ENCODE measurements at regions of chr19 and their contacts with region 1.

Region 1: GRCh38 chr19:12064590-12065538 is at the start of gene ZNF844:
- DNase-seq: peak; percentile 89
- ATAC-seq: peak; percentile 96
- H3K4me3 ChIP-seq: peak within 1 kb of the TSS; percentile 73 to 93 (median 76)
- H3K4me3 Mint-ChIP-seq: peak within 1 kb of the TSS; percentile 95
- H3K27ac ChIP-seq: peak within 1 kb of the TSS; percentile 83 to 87
- H3K27ac Mint-ChIP-seq: peak within 1 kb of the TSS; percentile 94
- H3K4me1 ChIP-seq: peaks cover 6 to 16% of the 10 kb centered on the region in 2 donors
- H3K4me1 Mint-ChIP-seq: peaks cover 11% of the 10 kb centered on the region
- H3K27me3 ChIP-seq: no peaks in the 10 kb centered on the region
- H3K27me3 Mint-ChIP-seq: no peaks in the 10 kb centered on the region
- CTCF ChIP-seq: no peak
- total RNA-seq, gene ZNF844: 33.7 and 36.4 TPM in 2 replicates

Region 2: GRCh38 chr19:11987405-11988281 is 77.2 kb before region 1 on chr19:
- CTCF ChIA-PET with region 1: interaction called, 8 read pairs
- POLR2A ChIA-PET with region 1: interaction called, 3 read pairs
- intact Hi-C with region 1: loop called (anchors 2 kb)
- DNase-seq: peak; percentile 93
- ATAC-seq: peak; percentile 93
- H3K4me3 ChIP-seq: peak overlapping the region; percentile 86 to 98 (median 97)
- H3K4me3 Mint-ChIP-seq: peak overlapping the region; percentile 96
- H3K27ac ChIP-seq: peak overlapping the region; percentile 85 to 92
- H3K27ac Mint-ChIP-seq: peak overlapping the region; percentile 89
- H3K4me1 ChIP-seq: peaks cover 0 to 5% of the 10 kb centered on the region in 2 donors
- H3K4me1 Mint-ChIP-seq: peaks cover 24% of the 10 kb centered on the region
- H3K27me3 ChIP-seq: no peaks in the 10 kb centered on the region
- H3K27me3 Mint-ChIP-seq: no peaks in the 10 kb centered on the region
- CTCF ChIP-seq: no peak

Region 3: GRCh38 chr19:12075538-12076139 is 10.8 kb after region 1 on chr19:
- CTCF ChIA-PET with region 1: interaction called, 10 read pairs
- POLR2A ChIA-PET with region 1: interaction called, 4 read pairs
- intact Hi-C with region 1: no loop called
- DNase-seq: no peak
- ATAC-seq: no peak
- H3K4me3 ChIP-seq: peak overlapping the region in 1 of 5 experiments; percentile 12
- H3K4me3 Mint-ChIP-seq: no peak overlapping the region
- H3K27ac ChIP-seq: no peak overlapping the region
- H3K27ac Mint-ChIP-seq: no peak overlapping the region
- H3K4me1 ChIP-seq: no peaks in the 10 kb centered on the region
- H3K4me1 Mint-ChIP-seq: no peaks in the 10 kb centered on the region
- H3K27me3 ChIP-seq: no peaks in the 10 kb centered on the region
- H3K27me3 Mint-ChIP-seq: no peaks in the 10 kb centered on the region
- CTCF ChIP-seq: no peak

Region 4: DNA sequence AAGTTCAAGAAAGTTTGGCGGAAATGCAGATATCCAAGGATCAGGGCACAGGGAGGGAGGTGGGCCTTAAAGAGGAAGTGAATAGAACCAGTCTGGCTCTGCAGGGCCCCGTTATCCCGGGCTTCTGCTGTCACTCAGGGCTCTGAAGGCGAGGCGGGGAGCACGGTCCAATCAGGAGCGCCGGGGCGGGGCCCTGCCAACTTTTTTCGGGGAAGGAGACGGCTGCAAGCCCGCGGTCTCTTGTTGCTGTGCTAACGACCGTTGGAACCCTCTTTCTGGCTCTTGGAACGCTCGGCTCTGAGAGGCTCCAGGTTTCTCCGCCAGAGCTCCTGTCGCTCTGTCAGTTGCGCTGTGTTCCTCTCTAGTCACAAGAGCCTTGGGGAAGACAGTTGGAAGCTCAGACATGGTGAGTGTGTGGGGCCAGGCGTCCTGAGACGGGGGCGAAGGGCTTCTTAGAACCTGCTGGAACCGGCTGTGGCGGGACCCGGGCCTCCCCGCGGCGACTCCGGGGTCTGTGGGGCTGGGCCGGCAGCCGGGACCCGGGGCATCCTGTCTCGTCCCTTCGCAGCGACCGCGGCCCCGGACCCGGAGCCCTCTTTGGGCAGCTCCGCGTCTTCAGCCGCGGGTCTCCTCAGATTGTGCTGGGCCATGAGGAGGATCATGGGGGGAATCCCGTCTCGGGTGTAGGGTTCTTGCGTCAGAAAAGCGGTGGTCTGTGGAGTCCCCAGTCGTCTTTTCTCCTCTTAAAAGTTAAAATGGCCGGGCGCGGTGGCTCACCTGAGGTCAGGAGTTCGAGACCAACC is 27.4 kb after region 1 on chr19:
- CTCF ChIA-PET with region 1: interaction called, 13 read pairs
- POLR2A ChIA-PET with region 1: no interaction called
- intact Hi-C with region 1: loop called (anchors 2 kb)
- DNase-seq: peak; percentile 63
- ATAC-seq: peak; percentile 63
- H3K4me3 ChIP-seq: peak overlapping the region; percentile 38 to 76 (median 57)
- H3K4me3 Mint-ChIP-seq: peak overlapping the region; percentile 86
- H3K27ac ChIP-seq: peak overlapping the region in 1 of 2 donors; percentile 20
- H3K27ac Mint-ChIP-seq: peak overlapping the region; percentile 20
- H3K4me1 ChIP-seq: peaks cover 6 to 14% of the 10 kb centered on the region in 2 donors
- H3K4me1 Mint-ChIP-seq: peaks cover 12% of the 10 kb centered on the region
- H3K27me3 ChIP-seq: no peaks in the 10 kb centered on the region
- H3K27me3 Mint-ChIP-seq: peaks cover 3% of the 10 kb centered on the region
- CTCF ChIP-seq: no peak

Region 5: GRCh38 chr19:12126707-12127106 is 61.8 kb after region 1 on chr19:
- CTCF ChIA-PET with region 1: interaction called, 10 read pairs
- POLR2A ChIA-PET with region 1: no interaction called
- intact Hi-C with region 1: no loop called
- DNase-seq: peak; percentile 37
- ATAC-seq: no peak
- H3K4me3 ChIP-seq: no peak overlapping the region
- H3K4me3 Mint-ChIP-seq: no peak overlapping the region
- H3K27ac ChIP-seq: no peak overlapping the region
- H3K27ac Mint-ChIP-seq: no peak overlapping the region
- H3K4me1 ChIP-seq: no peaks in the 10 kb centered on the region
- H3K4me1 Mint-ChIP-seq: no peaks in the 10 kb centered on the region
- H3K27me3 ChIP-seq: no peaks in the 10 kb centered on the region
- H3K27me3 Mint-ChIP-seq: no peaks in the 10 kb centered on the region
- CTCF ChIP-seq: peak; percentile 61

Measured in B cell (primary cell).